Aorta (tissue), 5 donors: ENCODE measurements at regions of chr6 and their contacts with region 1.

Region 1: DNA sequence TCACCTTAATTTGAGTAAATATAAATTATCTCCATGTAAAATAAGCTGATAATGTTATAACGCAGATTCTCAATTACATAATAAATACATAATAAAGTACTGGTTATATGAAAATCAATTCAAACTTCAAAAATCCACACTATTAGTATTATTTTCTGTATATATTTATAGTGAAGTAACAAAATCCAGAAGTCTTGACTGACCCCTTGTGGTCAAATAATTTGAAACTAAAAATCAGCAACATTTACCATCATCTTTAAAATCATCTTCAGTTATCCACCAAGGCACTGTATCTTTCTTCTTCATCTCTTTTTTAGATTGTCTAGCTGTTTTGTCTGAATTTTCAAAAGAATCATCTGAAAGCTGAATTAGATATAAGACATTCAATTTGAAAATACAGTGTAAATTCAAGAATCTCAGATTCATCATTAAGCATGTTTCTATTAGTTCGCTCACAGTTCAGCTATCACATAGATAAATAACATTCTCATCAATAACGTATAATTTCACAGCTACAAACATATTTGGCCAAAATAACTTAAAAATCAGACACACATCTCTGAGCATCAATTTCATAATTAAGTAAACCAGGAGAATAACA is 6.5 kb downstream of the CEP162 start:
- DNase-seq: no peak
- ATAC-seq: no peak
- H3K4me3 ChIP-seq: no peak overlapping the region
- H3K27ac ChIP-seq: no peak overlapping the region
- H3K4me1 ChIP-seq: peaks cover 0 to under 1% of the 10 kb centered on the region in 2 donors
- H3K27me3 ChIP-seq: no peaks in the 10 kb centered on the region

Region 2: DNA sequence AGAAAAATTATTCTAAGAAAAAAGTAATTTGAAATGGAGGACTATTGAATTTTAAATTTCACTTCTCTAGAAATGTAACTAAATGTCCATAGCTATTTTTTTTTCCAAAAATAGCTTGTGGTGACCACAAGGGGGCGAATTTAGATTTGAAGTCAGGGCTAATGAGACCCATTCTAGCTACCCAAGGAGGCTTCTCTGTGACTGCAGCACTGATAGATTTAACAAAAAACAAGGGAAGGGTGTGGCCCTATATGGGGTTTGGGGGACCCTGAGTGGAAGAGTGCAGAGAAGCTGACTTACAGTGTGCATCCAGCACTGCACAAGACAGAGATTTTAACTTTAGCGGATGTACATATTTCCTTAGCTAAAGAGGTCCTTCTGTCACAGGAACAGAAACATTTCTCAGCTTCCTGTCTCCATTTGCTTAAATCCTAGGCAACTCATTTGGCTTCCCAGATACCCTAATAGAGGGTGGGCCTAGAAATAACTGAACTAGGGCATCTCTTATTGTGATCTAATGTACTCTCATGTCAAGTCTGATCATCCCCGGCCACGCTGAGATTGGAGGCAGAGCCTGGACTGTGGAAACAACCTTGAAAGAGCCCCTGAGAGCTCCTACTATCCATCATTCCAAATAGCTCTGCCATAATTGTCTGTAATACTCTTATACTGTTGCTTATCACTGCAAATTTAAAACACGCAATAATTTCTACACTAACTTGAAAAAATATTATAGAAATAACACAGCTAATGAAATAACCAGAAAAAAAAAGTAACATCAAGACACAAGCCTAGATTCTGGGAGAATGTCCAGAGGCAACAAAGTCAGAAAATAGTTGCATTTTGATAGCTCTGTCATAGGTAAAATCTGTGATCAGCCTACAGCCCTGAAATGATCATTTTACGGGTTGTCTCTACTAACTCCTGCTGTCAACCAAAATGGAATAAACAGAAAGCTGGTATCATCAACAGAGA is 605.6 kb before region 1 on chr6:
- intact Hi-C with region 1: loop called (anchors 5 kb)
- DNase-seq: no peak
- ATAC-seq: peak; percentile 36
- H3K4me3 ChIP-seq: no peak overlapping the region
- H3K27ac ChIP-seq: no peak overlapping the region
- H3K4me1 ChIP-seq: no peaks in the 10 kb centered on the region
- H3K27me3 ChIP-seq: no peaks in the 10 kb centered on the region